KBM-7 (cell line): ENCODE measurements at regions of chr9 and their contacts with region 1.

Region 1: DNA sequence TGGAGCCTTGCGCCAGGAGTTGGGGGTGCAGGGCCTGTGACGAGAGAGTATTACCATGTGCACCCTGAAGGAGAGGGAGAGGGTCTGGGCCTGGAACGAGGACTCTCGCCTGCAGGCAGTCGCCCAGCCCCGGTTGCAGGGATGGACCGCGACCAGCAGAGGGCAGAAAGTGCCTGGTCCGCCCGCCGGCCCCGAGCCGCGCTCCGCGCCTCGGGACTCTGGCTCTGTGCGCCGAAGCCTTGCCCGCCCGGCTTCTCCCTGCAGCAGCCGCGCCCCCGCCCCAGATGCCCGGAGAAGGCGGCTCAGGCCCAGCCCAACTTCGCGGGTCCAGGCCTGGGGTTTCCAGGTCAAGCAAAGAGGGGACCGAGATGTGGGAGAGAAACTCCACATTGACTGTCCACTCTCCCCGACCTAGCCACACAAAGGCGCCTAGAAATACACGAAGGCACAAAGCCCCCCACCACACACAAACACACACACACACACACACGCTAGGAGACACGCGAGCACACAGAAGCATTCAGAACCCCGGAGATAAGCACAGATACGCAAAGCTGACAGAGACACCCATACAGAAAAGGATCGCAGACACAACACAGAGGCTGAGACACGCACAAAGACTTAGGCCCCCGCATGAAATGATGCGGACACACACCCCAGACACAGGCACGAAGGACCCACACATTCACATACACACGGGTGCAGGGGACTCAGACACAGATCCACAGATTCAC is 2.0 kb upstream of the LMX1B start:
- DNase-seq: peak; percentile 72

Region 2: GRCh38 chr9:126781186-126782052 is 169.7 kb after region 1 on chr9:
- in situ Hi-C with region 1: loop called (anchors 25 kb)
- DNase-seq: peak; percentile 86